ENCODE measurements at regions of chr7 and their contacts with region 1.

Region 1: GRCh38 chr7:48109848-48110663 is 21.0 kb downstream of the UPP1 start:
- DNase-seq: peak; percentile 94
- ATAC-seq: peak; percentile 92
- H3K4me3 Mint-ChIP-seq: no peak overlapping the region
- H3K27ac Mint-ChIP-seq: peak overlapping the region; percentile 50
- H3K4me1 Mint-ChIP-seq: peaks cover 11% of the 10 kb centered on the region
- H3K27me3 Mint-ChIP-seq: no peaks in the 10 kb centered on the region
- CTCF ChIP-seq: peak; percentile 96

Region 2: GRCh38 chr7:47937065-47937683 is 172.9 kb before region 1 on chr7:
- CTCF ChIA-PET with region 1: interaction called, 17 read pairs
- POLR2A ChIA-PET with region 1: no interaction called
- intact Hi-C with region 1: no loop called
- DNase-seq: peak; percentile 29
- ATAC-seq: peak; percentile 70
- H3K4me3 Mint-ChIP-seq: no peak overlapping the region
- H3K27ac Mint-ChIP-seq: no peak overlapping the region
- H3K4me1 Mint-ChIP-seq: peaks cover 5% of the 10 kb centered on the region
- H3K27me3 Mint-ChIP-seq: no peaks in the 10 kb centered on the region
- CTCF ChIP-seq: no peak

Region 3: DNA sequence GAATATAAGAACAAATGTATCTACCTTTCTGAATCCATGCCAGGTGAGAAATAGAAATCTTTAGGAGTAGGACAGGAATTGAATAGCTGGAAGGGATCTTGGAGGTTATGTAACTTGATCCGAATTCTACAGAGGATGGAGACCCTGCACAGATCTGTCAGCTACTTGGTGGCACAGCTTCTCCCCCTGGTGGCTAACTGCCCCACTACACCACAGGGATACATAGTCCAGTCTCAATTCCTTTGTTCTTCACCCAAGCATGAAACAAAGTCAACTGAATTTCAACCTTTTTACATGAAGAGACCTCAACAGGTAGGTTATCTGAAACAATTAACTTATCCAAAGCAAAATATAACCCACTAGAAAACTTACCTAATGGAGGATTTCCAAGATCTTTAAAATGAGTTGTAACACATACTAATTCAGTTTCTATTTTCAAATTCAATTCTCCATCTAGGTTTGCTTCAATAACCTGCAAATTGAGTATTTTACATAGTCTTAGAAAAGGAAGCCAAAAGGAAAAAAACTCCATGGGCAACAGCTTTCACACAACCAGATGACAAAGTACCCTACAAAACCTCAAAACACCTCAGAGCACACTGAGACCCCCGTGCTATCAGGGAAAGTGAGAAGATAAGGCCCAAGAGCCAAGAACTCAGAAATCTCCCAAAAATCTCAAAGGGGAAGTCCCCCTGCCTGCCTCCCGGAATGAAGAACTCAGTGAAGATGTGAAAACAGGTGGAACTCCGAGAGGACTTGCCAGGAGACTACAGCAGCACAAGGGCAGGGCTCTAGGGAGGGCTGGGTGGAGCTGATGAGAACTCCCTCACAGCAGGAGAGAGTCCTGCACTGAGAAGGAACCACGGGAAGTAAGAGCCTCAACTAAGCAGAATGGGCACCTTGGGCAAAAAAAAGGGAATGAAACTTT is 140.9 kb before region 1 on chr7:
- CTCF ChIA-PET with region 1: interaction called, 14 read pairs
- POLR2A ChIA-PET with region 1: interaction called, 3 read pairs
- intact Hi-C with region 1: no loop called
- DNase-seq: peak; percentile 75
- ATAC-seq: peak; percentile 83
- H3K4me3 Mint-ChIP-seq: no peak overlapping the region
- H3K27ac Mint-ChIP-seq: peak overlapping the region; percentile 51
- H3K4me1 Mint-ChIP-seq: peaks cover 28% of the 10 kb centered on the region
- H3K27me3 Mint-ChIP-seq: no peaks in the 10 kb centered on the region
- CTCF ChIP-seq: peak; percentile 85

Region 4: DNA sequence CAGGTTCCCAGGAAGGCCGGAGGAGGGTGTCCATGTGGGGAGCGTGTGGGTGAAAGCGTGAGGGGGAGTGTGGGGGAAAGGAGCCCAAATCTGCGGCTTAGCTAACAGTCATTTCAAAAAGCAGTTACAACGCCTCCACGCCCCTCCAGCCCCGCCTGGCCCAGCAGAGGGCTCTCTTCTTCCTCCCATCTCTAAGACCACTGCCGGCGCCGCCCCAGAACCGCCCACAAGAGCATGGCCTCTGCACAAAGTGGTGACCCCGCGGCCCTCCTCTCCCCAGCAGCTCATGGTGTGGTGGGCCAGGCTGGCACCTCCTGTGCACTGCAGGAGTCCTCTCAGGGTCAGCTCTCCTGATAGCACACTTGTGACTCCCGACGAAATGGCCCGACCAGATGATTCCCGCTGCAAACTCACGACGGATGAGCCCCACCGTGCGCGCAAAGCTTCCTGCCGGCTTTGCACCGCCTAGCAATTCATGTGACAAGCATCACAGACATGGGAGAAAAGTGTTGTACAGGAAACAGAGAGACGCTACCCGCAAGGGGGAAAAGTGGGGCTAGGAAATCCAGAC is 118.2 kb before region 1 on chr7:
- CTCF ChIA-PET with region 1: interaction called, 171 read pairs
- POLR2A ChIA-PET with region 1: interaction called, 6 read pairs
- intact Hi-C with region 1: loop called (anchors 1 kb)
- DNase-seq: peak; percentile 97
- ATAC-seq: peak; percentile 97
- H3K4me3 Mint-ChIP-seq: peak overlapping the region; percentile 83
- H3K27ac Mint-ChIP-seq: peak overlapping the region; percentile 94
- H3K4me1 Mint-ChIP-seq: peaks cover 17% of the 10 kb centered on the region
- H3K27me3 Mint-ChIP-seq: no peaks in the 10 kb centered on the region
- CTCF ChIP-seq: peak; percentile 53

Region 5: DNA sequence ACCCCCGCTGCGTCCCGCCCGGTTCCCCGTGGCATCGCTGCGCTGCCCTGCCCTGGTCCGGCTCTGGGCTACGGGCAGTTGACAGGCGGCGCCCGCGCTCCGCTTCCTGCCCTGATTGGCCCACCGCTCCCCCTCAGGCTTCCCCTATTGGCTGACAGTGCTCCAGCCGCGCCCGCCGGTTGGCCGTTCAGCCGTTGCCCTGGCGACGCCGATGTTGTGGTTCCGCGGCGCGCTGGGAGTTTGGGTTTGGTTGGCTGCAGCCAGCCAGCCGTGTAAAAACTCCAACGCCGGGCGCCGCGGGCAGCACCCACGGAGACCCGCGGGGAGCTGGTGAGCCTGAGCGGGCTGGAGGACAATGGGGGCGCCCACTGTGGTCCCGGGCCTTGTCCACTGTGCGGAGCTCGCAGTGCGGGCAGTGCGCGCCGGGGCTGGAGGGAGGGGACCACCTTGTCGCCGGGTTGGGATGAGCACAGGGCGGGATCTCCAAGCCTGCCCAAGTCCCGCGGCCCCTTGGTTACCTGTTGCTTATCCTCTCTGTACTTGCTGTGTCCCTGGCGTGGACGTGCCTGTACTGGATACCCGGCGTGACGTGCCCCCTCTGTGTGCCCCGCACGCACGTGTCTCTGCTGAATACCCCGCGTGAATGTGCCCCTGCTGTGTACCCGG is 74.6 kb before region 1 on chr7 and contains the start of gene C7orf57:
- CTCF ChIA-PET with region 1: interaction called, 10 read pairs
- POLR2A ChIA-PET with region 1: interaction called, 3 read pairs
- intact Hi-C with region 1: no loop called
- DNase-seq: peak; percentile 85
- ATAC-seq: peak; percentile 96
- H3K4me3 Mint-ChIP-seq: peak within 1 kb of the TSS; percentile 69
- H3K27ac Mint-ChIP-seq: no peak within 1 kb of the TSS
- H3K4me1 Mint-ChIP-seq: peaks cover 9% of the 10 kb centered on the region
- H3K27me3 Mint-ChIP-seq: peaks cover 26% of the 10 kb centered on the region
- CTCF ChIP-seq: no peak
- total RNA-seq, gene C7orf57: 0.74 to 0.83 TPM

Region 6: DNA sequence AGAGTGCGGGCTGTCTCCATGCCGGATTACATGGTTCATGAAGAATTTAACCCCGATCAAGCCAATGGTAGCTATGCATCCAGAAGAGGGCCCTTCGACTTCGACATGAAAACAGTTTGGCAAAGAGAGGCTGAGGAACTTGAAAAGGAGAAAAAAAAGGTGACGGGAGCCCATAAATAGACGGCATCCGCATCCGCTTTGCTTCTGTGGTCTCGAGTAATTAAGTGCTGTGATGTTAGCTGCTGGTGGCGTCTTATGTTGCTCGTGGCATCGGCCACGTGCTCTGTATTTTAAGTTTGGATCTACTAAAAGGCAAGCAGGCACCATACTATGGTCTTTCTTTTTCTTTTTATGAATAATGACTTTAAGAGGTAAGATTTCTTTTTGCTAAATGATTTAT is 63.6 kb before region 1 on chr7:
- CTCF ChIA-PET with region 1: no interaction called
- POLR2A ChIA-PET with region 1: no interaction called
- intact Hi-C with region 1: no loop called
- DNase-seq: peak; percentile 35
- ATAC-seq: peak; percentile 35
- H3K4me3 Mint-ChIP-seq: no peak overlapping the region
- H3K27ac Mint-ChIP-seq: no peak overlapping the region
- H3K4me1 Mint-ChIP-seq: peaks cover 35% of the 10 kb centered on the region
- H3K27me3 Mint-ChIP-seq: no peaks in the 10 kb centered on the region
- CTCF ChIP-seq: no peak

Region 7: GRCh38 chr7:48130658-48131108 is 20.6 kb after region 1 on chr7:
- CTCF ChIA-PET with region 1: interaction called, 12 read pairs
- POLR2A ChIA-PET with region 1: no interaction called
- intact Hi-C with region 1: no loop called
- DNase-seq: no peak
- ATAC-seq: peak; percentile 67
- H3K4me3 Mint-ChIP-seq: no peak overlapping the region
- H3K27ac Mint-ChIP-seq: no peak overlapping the region
- H3K4me1 Mint-ChIP-seq: peaks cover 1% of the 10 kb centered on the region
- H3K27me3 Mint-ChIP-seq: peaks cover 5% of the 10 kb centered on the region
- CTCF ChIP-seq: no peak